B cell (primary cell): ENCODE measurements at regions of chr3 and their contacts with region 1.

Region 1: DNA sequence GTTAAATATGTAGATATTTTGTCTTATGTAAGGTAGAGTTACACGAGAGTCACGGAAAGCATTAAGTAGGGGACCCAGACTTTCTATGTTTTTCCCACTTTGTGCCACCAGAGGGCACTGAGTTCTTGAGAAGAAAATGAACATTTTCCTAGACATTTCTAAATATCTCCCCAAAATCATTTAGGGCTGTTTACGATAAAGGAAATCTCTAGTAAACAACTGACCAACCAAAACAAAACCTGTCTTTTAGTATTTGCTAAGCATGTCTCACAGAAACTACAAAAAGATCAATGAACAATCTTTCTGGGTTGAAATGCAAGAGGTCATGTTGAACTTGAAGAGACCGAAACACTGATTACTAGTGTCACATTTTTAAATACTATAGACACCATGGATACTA is 16.1 kb downstream of the POU1F1 start:
- DNase-seq: peak; percentile 61
- ATAC-seq: peak; percentile 60
- H3K4me3 ChIP-seq: no peak overlapping the region
- H3K4me3 Mint-ChIP-seq: no peak overlapping the region
- H3K27ac ChIP-seq: no peak overlapping the region
- H3K27ac Mint-ChIP-seq: no peak overlapping the region
- H3K4me1 ChIP-seq: no peaks in the 10 kb centered on the region
- H3K4me1 Mint-ChIP-seq: peaks cover 2% of the 10 kb centered on the region
- H3K27me3 ChIP-seq: no peaks in the 10 kb centered on the region
- H3K27me3 Mint-ChIP-seq: no peaks in the 10 kb centered on the region
- CTCF ChIP-seq: peak; percentile 83

Region 2: GRCh38 chr3:87270908-87271700 is 10.8 kb after region 1 on chr3:
- CTCF ChIA-PET with region 1: interaction called, 14 read pairs
- POLR2A ChIA-PET with region 1: no interaction called
- intact Hi-C with region 1: no loop called
- DNase-seq: peak; percentile 34
- ATAC-seq: no peak
- H3K4me3 ChIP-seq: no peak overlapping the region
- H3K4me3 Mint-ChIP-seq: peak overlapping the region; percentile 8
- H3K27ac ChIP-seq: no peak overlapping the region
- H3K27ac Mint-ChIP-seq: peak overlapping the region; percentile 38
- H3K4me1 ChIP-seq: peaks cover 19 to 25% of the 10 kb centered on the region in 2 donors
- H3K4me1 Mint-ChIP-seq: peaks cover 22% of the 10 kb centered on the region
- H3K27me3 ChIP-seq: no peaks in the 10 kb centered on the region
- H3K27me3 Mint-ChIP-seq: peaks cover 4% of the 10 kb centered on the region
- CTCF ChIP-seq: no peak

Region 3: DNA sequence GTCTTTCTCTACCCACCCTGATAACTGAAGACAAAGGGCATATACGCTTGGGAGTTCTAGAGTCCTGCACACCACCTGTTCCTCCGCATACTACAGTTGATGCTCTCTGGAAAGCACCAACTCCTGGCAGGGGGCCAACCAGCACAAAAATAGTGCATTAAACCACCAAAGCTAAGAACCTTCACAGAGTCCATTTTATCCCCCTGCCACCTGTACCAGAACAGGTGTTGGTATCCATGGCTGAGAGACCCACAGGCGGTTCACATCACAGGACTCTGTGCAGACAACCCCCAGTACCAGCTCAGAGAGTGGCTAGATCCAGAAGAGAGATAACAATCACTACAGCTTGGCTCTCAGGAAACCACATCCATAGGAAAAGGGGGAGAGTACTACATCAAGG is 130.6 kb after region 1 on chr3:
- CTCF ChIA-PET with region 1: no interaction called
- POLR2A ChIA-PET with region 1: no interaction called
- intact Hi-C with region 1: no loop called
- DNase-seq: no peak
- ATAC-seq: no peak
- H3K4me3 ChIP-seq: no peak overlapping the region
- H3K4me3 Mint-ChIP-seq: no peak overlapping the region
- H3K27ac ChIP-seq: no peak overlapping the region
- H3K27ac Mint-ChIP-seq: no peak overlapping the region
- H3K4me1 ChIP-seq: no peaks in the 10 kb centered on the region
- H3K4me1 Mint-ChIP-seq: no peaks in the 10 kb centered on the region
- H3K27me3 ChIP-seq: no peaks in the 10 kb centered on the region
- H3K27me3 Mint-ChIP-seq: no peaks in the 10 kb centered on the region
- CTCF ChIP-seq: no peak